Activated CD8-positive, alpha-beta T cell treated with anti-CD3 and anti-CD28 coated beads for 36 hours (primary cell): ENCODE measurements at regions of chr15 and their contacts with region 1.

Region 1: GRCh38 chr15:32884146-32884545 is 166.3 kb downstream of the GREM1 start:
- DNase-seq: no peak
- ATAC-seq: no peak
- H3K4me3 Mint-ChIP-seq: no peak overlapping the region
- H3K27ac Mint-ChIP-seq: no peak overlapping the region
- H3K4me1 Mint-ChIP-seq: no peaks in the 10 kb centered on the region
- H3K27me3 Mint-ChIP-seq: no peaks in the 10 kb centered on the region
- CTCF ChIP-seq: no peak

Region 2: GRCh38 chr15:32824777-32825176 is 59.4 kb before region 1 on chr15:
- CTCF ChIA-PET with region 1: no interaction called
- POLR2A ChIA-PET with region 1: no interaction called
- intact Hi-C with region 1: loop called (anchors 10 kb)
- DNase-seq: no peak
- ATAC-seq: no peak
- H3K4me3 Mint-ChIP-seq: no peak overlapping the region
- H3K27ac Mint-ChIP-seq: no peak overlapping the region
- H3K4me1 Mint-ChIP-seq: no peaks in the 10 kb centered on the region
- H3K27me3 Mint-ChIP-seq: peaks cover 8% of the 10 kb centered on the region
- CTCF ChIP-seq: no peak